ENCODE measurements at regions of chr17 and their contacts with region 1.

Region 1: DNA sequence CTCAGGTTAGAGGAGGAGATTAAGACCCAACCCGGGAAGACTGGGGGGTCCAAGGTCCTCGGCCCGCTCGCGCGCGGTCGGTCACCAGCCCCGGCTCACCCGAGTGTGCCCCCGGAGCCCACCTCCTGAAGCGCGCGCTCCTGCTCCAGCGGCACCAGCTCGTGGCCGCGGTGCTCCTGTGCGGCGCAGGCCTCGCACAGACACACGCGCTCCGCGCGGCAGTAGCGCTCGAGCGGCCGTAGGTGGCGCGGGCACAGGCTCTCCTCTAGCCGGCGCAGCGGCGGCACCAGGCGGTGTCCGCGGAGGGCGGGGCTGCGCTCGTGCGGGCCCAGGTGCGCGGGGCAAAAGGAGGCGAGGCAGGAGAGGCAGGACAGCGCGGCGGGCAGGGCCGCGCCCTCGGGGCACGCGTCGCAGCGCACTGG is 618 bp downstream of the TRIM47 start:
- DNase-seq: peak in 1 of 2 experiments; percentile 86
- ATAC-seq: peak; percentile 60 to 72
- H3K4me3 ChIP-seq: peak overlapping the region; percentile 85
- H3K27ac ChIP-seq: peak overlapping the region; percentile 92 to 94
- H3K4me1 ChIP-seq: peaks cover 36% of the 10 kb centered on the region
- CTCF ChIP-seq: peak; percentile 37
- EP300 ChIP-seq: no peak
- POLR2A ChIP-seq: peak; percentile 18; the same call in 1 of the 2 replicates
- RAD21 ChIP-seq: no peak; a peak in 1 of 5 replicates

Region 2: GRCh38 chr17:75784473-75785015 is 93.2 kb before region 1 on chr17 and contains the start of gene UNK:
- CTCF ChIA-PET with region 1: interaction called, 12 read pairs
- POLR2A ChIA-PET with region 1: interaction called, 52 read pairs
- DNase-seq: peak; percentile 100
- ATAC-seq: peak; percentile 86 to 89
- H3K4me3 ChIP-seq: peak within 1 kb of the TSS; percentile 60
- H3K27ac ChIP-seq: peak within 1 kb of the TSS; percentile 96 to 97
- H3K4me1 ChIP-seq: peaks cover 39% of the 10 kb centered on the region
- CTCF ChIP-seq: no peak
- EP300 ChIP-seq: no peak
- POLR2A ChIP-seq: no peak
- RAD21 ChIP-seq: no peak
- polyA plus RNA-seq, gene UNK: 34.5 and 40.0 TPM in 2 replicates

Region 3: GRCh38 chr17:75845049-75845860 is 32.5 kb before region 1 on chr17:
- CTCF ChIA-PET with region 1: interaction called, 92 read pairs
- POLR2A ChIA-PET with region 1: no interaction called
- DNase-seq: peak; percentile 91 to 92
- ATAC-seq: peak; percentile 69 to 87
- H3K4me3 ChIP-seq: peak overlapping the region; percentile 0; the same call in 1 of the 3 replicates
- H3K27ac ChIP-seq: peak overlapping the region; percentile 79 to 89
- H3K4me1 ChIP-seq: peaks cover 43% of the 10 kb centered on the region
- CTCF ChIP-seq: peak; percentile 49
- EP300 ChIP-seq: no peak
- POLR2A ChIP-seq: no peak
- RAD21 ChIP-seq: peak in 1 of 2 experiments; percentile 23; a peak in 1 of 5 replicates

Region 4: GRCh38 chr17:75864448-75864871 is 13.3 kb before region 1 on chr17:
- CTCF ChIA-PET with region 1: interaction called, 330 read pairs
- POLR2A ChIA-PET with region 1: no interaction called
- DNase-seq: no peak
- ATAC-seq: peak; percentile 23 to 28; a peak in 3 of 6 replicates
- H3K4me3 ChIP-seq: no peak overlapping the region
- H3K27ac ChIP-seq: no peak overlapping the region
- H3K4me1 ChIP-seq: peaks cover 10% of the 10 kb centered on the region
- CTCF ChIP-seq: no peak
- EP300 ChIP-seq: no peak
- POLR2A ChIP-seq: no peak
- RAD21 ChIP-seq: no peak

Region 5: GRCh38 chr17:75904749-75905521 is 27.2 kb after region 1 on chr17 and contains the start of gene MRPL38:
- CTCF ChIA-PET with region 1: interaction called, 513 read pairs
- POLR2A ChIA-PET with region 1: interaction called, 18 read pairs
- DNase-seq: peak; percentile 97 to 98
- ATAC-seq: peak; percentile 96 to 97
- H3K4me3 ChIP-seq: peak within 1 kb of the TSS; percentile 87
- H3K27ac ChIP-seq: peak within 1 kb of the TSS; percentile 86 to 93
- H3K4me1 ChIP-seq: peaks cover 22% of the 10 kb centered on the region
- CTCF ChIP-seq: peak; percentile 99
- EP300 ChIP-seq: no peak
- POLR2A ChIP-seq: peak; percentile 92
- RAD21 ChIP-seq: peak; percentile 90 to 98
- polyA plus RNA-seq, gene MRPL38: 43.4 and 53.5 TPM in 2 replicates

Region 6: GRCh38 chr17:75959051-75959838 is 81.5 kb after region 1 on chr17:
- CTCF ChIA-PET with region 1: no interaction called
- POLR2A ChIA-PET with region 1: no interaction called
- DNase-seq: no peak
- ATAC-seq: no peak; a peak in 1 of 6 replicates
- H3K4me3 ChIP-seq: no peak overlapping the region
- H3K27ac ChIP-seq: no peak overlapping the region
- H3K4me1 ChIP-seq: peaks cover 17% of the 10 kb centered on the region; the same call in 2 of the 3 replicates
- CTCF ChIP-seq: no peak
- EP300 ChIP-seq: no peak
- POLR2A ChIP-seq: no peak
- RAD21 ChIP-seq: no peak

Measured in A549 (cell line).